ENCODE measurements at regions of chr17 and their contacts with region 1.

Region 1: DNA sequence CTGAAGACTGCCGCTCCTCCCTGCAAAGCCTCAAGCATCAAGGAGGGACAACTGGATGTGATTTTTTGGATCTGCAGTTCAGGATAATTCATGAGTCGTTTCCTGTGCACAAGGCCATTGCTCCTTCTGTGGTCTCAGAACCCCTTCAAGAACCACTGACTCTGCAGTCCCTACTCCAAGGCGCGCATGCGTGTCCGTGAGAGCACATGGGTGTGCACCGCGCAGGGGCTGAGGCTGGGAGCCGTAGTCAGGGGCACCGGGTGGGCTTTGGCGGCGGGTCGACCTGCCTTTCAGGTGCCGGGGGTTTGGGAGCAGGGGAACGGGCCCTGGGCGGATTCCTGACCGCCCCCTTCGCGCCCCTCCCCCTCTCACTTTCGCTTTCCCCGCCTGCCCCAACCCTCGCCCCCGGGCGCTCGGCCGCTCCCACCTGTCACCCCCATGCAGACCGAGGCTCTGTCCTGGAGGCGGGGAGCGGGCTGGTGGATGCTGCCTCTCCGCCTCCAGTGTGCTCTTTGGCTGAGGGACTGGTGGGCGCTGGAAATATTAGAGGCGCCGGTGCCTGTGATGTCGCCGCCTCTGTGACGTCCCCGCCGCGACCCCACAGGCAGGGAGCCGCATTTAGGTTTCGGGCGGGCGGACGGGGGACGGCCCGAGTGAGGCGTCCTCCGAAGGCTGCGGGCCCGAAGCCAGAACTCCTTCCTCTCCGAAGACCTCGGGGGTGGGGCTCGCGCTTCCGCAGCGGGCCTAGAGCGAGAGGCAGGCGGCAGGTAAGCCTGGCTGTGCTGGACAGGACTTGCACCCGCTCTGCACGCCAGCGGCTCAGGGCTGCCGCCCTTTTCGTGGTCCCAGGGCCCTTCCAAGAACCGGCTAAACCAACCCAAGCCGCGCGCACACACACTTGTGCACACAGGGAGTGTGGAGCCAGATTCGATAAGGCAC is at the start of gene SPATA32:
- DNase-seq: peak; percentile 45 to 69 (median 66)
- ATAC-seq: peak; percentile 83
- H3K4me3 ChIP-seq: peak within 1 kb of the TSS; percentile 52
- H3K4me3 Mint-ChIP-seq: peak within 1 kb of the TSS; percentile 77 to 89 (median 84)
- H3K27ac ChIP-seq: peak within 1 kb of the TSS; percentile 85
- H3K27ac Mint-ChIP-seq: peak within 1 kb of the TSS; percentile 58 to 93 (median 86)
- H3K4me1 ChIP-seq: peaks cover 10 to 31% of the 10 kb centered on the region in 2 donors
- H3K4me1 Mint-ChIP-seq: peaks cover 22 to 55% (median 45%) of the 10 kb centered on the region in 7 donors
- H3K27me3 ChIP-seq: no peaks in the 10 kb centered on the region
- H3K27me3 Mint-ChIP-seq: no peaks in the 10 kb centered on the region
- total RNA-seq, gene SPATA32: 0.12 to 1.1 (median 0.58) TPM in 4 of 5 experiments, not detected in the other

Region 2: DNA sequence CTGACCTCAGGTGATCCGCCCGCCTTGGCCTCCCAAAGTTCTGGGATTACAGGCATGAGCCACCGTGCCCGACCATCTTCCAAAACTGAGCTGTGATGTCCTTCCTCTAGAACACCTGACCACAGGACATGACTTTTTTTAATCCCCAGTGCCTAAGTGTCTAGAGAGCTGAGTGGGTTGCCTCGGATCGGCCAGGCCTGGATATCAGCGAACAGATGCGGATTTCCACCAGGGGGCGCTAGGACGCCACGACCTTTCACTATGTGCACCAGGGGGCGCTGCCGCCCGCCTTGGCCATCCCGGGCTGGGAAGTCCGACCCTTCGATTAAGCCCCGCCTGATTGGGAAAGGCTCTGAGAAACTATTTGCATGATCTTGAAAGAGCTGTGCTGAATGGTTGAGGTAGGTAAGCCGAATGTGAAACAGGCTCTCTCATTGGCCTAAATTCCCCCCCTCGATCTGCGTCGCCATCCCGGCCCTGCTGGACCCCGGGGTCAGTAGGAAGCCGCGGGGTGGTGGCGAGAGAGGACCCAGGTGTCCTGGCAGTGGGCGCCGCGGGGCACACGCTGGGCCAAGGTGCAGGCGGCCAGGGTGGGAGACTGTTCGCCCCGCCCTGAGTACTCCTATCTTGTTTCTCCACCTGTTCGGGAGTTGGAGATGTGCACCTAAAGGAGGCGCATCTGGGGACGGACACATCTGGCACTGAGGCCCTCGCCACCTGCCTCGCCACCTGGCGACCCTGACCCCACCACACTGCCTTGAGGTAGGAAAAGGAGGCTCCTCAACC is 126.5 kb before region 1 on chr17 and contains the start of gene ACBD4:
- CTCF ChIA-PET with region 1: no interaction called
- POLR2A ChIA-PET with region 1: no interaction called
- intact Hi-C with region 1: no loop called
- DNase-seq: peak; percentile 95 to 100 (median 98)
- ATAC-seq: peak; percentile 93
- H3K4me3 ChIP-seq: peak within 1 kb of the TSS; percentile 94
- H3K4me3 Mint-ChIP-seq: peak within 1 kb of the TSS; percentile 87 to 95 (median 90)
- H3K27ac ChIP-seq: peak within 1 kb of the TSS; percentile 76
- H3K27ac Mint-ChIP-seq: peak within 1 kb of the TSS; percentile 75 to 92 (median 82)
- H3K4me1 ChIP-seq: peaks cover 12% of the 10 kb centered on the region in 2 donors
- H3K4me1 Mint-ChIP-seq: peaks cover 9 to 25% (median 21%) of the 10 kb centered on the region in 7 donors
- H3K27me3 ChIP-seq: no peaks in the 10 kb centered on the region
- H3K27me3 Mint-ChIP-seq: peaks cover 0 to 8% (median 0%) of the 10 kb centered on the region in 5 donors
- total RNA-seq, gene ACBD4: 17.9 to 59.5 (median 31.3) TPM

Region 3: GRCh38 chr17:45228763-45229539 is 32.9 kb before region 1 on chr17:
- CTCF ChIA-PET with region 1: interaction called, 3 read pairs
- POLR2A ChIA-PET with region 1: interaction called, 851 read pairs
- intact Hi-C with region 1: loop called in 1 of 2 experiments (anchors 5 kb)
- DNase-seq: peak; percentile 64 to 92 (median 74)
- ATAC-seq: peak; percentile 66
- H3K4me3 ChIP-seq: peak overlapping the region; percentile 91
- H3K4me3 Mint-ChIP-seq: peak overlapping the region; percentile 83 to 99 (median 96)
- H3K27ac ChIP-seq: peak overlapping the region; percentile 96
- H3K27ac Mint-ChIP-seq: peak overlapping the region; percentile 96 to 100 (median 99)
- H3K4me1 ChIP-seq: peaks cover 62 to 77% of the 10 kb centered on the region in 2 donors
- H3K4me1 Mint-ChIP-seq: peaks cover 54 to 91% (median 77%) of the 10 kb centered on the region in 7 donors
- H3K27me3 ChIP-seq: no peaks in the 10 kb centered on the region
- H3K27me3 Mint-ChIP-seq: no peaks in the 10 kb centered on the region

Measured in naive thymus-derived CD4-positive, alpha-beta T cell (primary cell).